Aorta (tissue), 5 donors: ENCODE measurements at regions of chr13 and their contacts with region 1.

Region 1: DNA sequence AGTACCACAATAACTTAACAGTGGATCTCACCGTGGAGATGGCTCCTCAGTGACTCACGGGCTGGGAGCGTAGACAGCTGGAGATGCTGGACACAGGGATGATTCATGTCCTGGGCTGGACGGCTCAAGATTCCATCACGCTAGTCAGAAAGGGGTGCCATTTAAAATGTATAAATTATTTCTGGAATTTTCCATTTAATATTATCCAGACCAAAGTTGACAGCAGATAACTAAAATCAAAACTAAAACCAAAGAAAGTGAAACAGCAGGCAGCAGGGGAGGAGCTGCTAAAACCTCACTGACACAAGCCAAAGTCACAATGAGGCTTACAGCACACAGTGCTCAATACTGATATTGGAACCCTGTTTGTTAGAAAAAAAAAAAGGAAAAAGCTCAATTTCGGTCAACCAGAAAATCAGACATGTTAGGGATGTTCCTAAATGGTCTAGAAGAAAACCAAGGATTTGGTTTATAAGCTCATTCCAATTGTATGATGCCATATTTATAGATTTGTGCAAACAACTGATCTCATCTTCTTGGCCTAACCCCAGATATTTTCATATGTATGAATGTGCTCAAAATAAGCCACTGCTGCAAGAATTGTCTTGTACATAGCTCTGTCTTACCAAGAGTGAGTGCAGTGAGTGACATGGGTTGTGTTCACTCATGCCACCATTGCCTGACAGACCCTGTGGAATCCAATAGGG is 111.8 kb downstream of the SACS start:
- DNase-seq: peak; percentile 82 to 92
- ATAC-seq: peak; percentile 79
- H3K4me3 ChIP-seq: peak overlapping the region in 1 of 2 donors; percentile 53
- H3K27ac ChIP-seq: peak overlapping the region; percentile 23 to 85
- H3K4me1 ChIP-seq: peaks cover 0 to 7% of the 10 kb centered on the region in 2 donors
- H3K27me3 ChIP-seq: no peaks in the 10 kb centered on the region

Region 2: GRCh38 chr13:23020223-23020843 is 301.4 kb before region 1 on chr13:
- intact Hi-C with region 1: loop called in 1 of 2 experiments (anchors 5 kb)
- DNase-seq: no peak
- ATAC-seq: peak; percentile 83
- H3K4me3 ChIP-seq: no peak overlapping the region
- H3K27ac ChIP-seq: no peak overlapping the region
- H3K4me1 ChIP-seq: no peaks in the 10 kb centered on the region
- H3K27me3 ChIP-seq: no peaks in the 10 kb centered on the region

Region 3: GRCh38 chr13:23159760-23160637 is 161.7 kb before region 1 on chr13:
- intact Hi-C with region 1: loop called in 1 of 2 experiments (anchors 10 kb)
- DNase-seq: peak in 1 of 2 donors; percentile 78
- ATAC-seq: peak; percentile 54
- H3K4me3 ChIP-seq: peak overlapping the region in 1 of 2 donors; percentile 58
- H3K27ac ChIP-seq: no peak overlapping the region
- H3K4me1 ChIP-seq: no peaks in the 10 kb centered on the region
- H3K27me3 ChIP-seq: no peaks in the 10 kb centered on the region

Region 4: DNA sequence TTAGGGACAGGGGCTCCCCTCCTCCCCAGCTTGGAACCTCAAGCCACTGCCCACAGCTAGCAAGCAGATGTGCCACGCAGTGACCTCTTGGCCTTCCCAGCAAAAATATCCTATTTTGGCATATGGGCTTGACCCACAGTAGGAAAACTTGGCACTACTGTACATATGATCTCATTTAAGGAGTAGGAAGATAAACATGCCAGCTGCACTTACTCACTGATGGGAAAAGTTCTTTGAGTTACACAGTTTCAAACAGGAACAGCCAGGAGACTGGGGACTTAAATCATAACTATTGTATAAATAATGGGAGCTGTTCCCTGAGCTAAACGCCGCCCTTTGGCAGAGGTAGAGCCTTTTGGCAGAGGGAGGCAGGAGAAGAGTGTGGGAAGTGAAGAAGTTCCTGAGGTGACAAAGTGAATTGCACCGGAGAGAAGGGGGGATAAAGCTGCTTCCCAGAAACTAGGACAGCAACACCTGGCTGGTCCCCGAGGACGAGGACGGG is 105.7 kb after region 1 on chr13:
- intact Hi-C with region 1: loop called in 1 of 2 experiments (anchors 10 kb)
- DNase-seq: peak in 1 of 2 donors; percentile 64
- ATAC-seq: peak; percentile 89
- H3K4me3 ChIP-seq: no peak overlapping the region
- H3K27ac ChIP-seq: peak overlapping the region; percentile 69 to 84
- H3K4me1 ChIP-seq: no peaks in the 10 kb centered on the region
- H3K27me3 ChIP-seq: no peaks in the 10 kb centered on the region